ENCODE measurements at regions of chr19 and their contacts with region 1.

Region 1: GRCh38 chr19:35716801-35717666 is 769 bp upstream of the KMT2B start:
- DNase-seq: peak; percentile 99
- H3K4me3 Mint-ChIP-seq: peak overlapping the region; percentile 92
- H3K27ac Mint-ChIP-seq: peak overlapping the region; percentile 93
- H3K4me1 Mint-ChIP-seq: peaks cover 50% of the 10 kb centered on the region
- H3K27me3 Mint-ChIP-seq: no peaks in the 10 kb centered on the region

Region 2: DNA sequence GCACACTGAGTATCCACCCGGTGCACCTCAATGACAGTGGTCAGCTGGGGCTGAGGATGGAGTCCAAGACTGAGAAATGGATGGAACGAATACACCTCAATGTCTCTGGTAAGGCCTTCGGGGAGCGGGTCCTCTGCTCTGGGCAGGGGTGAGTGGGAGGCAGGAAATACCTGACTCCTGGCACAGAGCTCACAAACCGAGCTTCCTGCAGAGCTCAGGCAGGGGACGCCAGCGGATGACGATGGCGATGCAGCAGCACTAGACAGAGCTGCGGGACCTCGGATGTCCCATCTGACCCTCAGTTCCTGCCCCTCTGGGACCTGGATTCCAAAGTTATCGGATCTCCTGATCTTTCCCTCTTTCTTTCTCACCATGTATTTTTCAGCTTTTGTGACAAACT is 384.2 kb before region 1 on chr19:
- intact Hi-C with region 1: no loop called
- DNase-seq: peak; percentile 78
- H3K4me3 Mint-ChIP-seq: peak overlapping the region; percentile 45
- H3K27ac Mint-ChIP-seq: peak overlapping the region; percentile 75
- H3K4me1 Mint-ChIP-seq: peaks cover 31% of the 10 kb centered on the region
- H3K27me3 Mint-ChIP-seq: no peaks in the 10 kb centered on the region

Region 3: DNA sequence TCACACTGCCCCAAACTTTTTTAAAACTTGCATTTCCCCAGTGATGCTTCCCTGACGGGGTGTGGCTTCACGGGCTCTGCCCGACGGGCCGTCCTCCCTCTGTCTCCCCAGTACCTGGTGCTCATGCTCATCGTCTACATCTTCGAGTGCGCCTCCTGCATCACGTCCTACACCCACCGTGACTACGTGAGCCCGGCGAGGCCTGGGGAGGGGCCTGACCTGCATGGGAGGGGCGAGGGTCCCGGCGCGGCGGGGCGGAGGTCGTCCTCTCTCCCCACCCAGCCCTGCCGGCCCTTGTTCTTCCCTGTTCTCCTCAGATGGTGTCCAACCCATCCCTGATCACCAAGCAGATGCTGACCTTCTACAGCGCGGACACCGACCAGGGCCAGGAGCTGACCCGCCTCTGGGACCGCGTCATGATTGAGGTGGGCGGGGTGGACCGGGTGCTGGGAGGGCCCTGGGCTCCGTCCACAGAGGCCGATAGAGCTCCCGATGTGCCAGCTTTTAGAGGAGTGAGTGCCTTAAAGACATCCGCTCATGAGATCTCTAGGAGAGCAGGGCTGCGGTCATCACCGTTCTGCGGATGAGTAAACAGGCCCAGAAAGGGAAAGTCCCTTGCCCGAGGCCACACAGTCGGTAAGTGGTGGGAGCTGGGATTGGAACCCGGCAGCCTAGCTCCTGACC is 43.8 kb before region 1 on chr19:
- intact Hi-C with region 1: loop called (anchors 1 kb)
- DNase-seq: peak; percentile 85
- H3K4me3 Mint-ChIP-seq: peak overlapping the region; percentile 83
- H3K27ac Mint-ChIP-seq: peak overlapping the region; percentile 48
- H3K4me1 Mint-ChIP-seq: peaks cover 10% of the 10 kb centered on the region
- H3K27me3 Mint-ChIP-seq: peaks cover 32% of the 10 kb centered on the region

Region 4: GRCh38 chr19:35702223-35703012 is 14.6 kb before region 1 on chr19:
- intact Hi-C with region 1: loop called (anchors 1 kb)
- DNase-seq: peak; percentile 98
- H3K4me3 Mint-ChIP-seq: peak overlapping the region; percentile 89
- H3K27ac Mint-ChIP-seq: peak overlapping the region; percentile 92
- H3K4me1 Mint-ChIP-seq: peaks cover 7% of the 10 kb centered on the region
- H3K27me3 Mint-ChIP-seq: no peaks in the 10 kb centered on the region

Region 5: GRCh38 chr19:35748106-35749020 is 31.3 kb after region 1 on chr19 and contains the start of gene LIN37:
- intact Hi-C with region 1: loop called (anchors 1 kb)
- DNase-seq: peak; percentile 100
- H3K4me3 Mint-ChIP-seq: peak within 1 kb of the TSS; percentile 99
- H3K27ac Mint-ChIP-seq: peak within 1 kb of the TSS; percentile 95
- H3K4me1 Mint-ChIP-seq: peaks cover 37% of the 10 kb centered on the region
- H3K27me3 Mint-ChIP-seq: no peaks in the 10 kb centered on the region
- total RNA-seq, gene LIN37: 7.7 and 11.1 TPM in 2 replicates

Region 6: DNA sequence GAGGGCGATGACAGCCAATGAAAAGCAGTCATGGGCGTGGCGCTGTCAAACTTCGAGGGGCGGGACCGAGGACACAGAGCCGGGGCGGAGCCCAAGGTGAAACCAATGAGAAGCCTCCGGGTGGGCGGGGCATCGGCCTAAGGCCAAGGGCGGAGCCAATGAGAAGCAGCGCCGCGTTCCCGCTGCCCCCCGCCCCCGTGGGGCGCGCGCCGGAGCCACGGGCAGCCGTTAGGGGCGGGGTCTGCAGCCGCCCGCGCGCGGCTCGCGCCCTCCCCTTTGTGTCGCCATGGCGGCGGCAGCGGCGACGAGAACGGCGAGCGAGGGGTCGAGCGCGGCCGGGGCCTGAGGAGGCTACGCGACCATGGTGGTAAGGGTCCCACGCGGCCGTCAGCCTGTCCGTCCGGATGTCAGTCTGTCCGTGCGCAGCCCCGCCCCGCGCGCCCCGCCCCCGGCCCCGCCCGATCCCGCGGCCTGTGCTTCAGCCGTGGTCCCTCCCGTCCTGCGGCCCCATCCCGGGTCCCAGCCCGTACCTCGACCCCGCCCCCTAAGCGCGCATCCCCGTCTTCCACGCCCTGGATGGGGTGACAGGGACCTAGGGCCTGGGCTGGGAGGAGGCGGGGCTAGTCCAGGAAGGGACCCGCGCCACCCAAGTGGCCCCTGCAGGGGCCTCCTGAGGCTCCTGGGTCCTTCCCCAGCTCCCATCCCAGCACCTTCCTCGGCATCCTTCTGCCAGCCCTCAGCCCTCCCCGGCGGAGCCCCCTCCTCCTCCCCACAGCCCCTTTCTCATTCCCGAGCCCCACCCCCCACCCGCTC is 58.5 kb after region 1 on chr19 and contains the start of gene ARHGAP33:
- intact Hi-C with region 1: loop called (anchors 1 kb)
- DNase-seq: peak; percentile 100
- H3K4me3 Mint-ChIP-seq: peak within 1 kb of the TSS; percentile 88
- H3K27ac Mint-ChIP-seq: peak within 1 kb of the TSS; percentile 71
- H3K4me1 Mint-ChIP-seq: peaks cover 26% of the 10 kb centered on the region
- H3K27me3 Mint-ChIP-seq: no peaks in the 10 kb centered on the region
- total RNA-seq, gene ARHGAP33: 24.6 and 26.4 TPM in 2 replicates

Region 7: GRCh38 chr19:35931161-35931873 is 214.3 kb after region 1 on chr19:
- intact Hi-C with region 1: loop called (anchors 1 kb)
- DNase-seq: peak; percentile 100
- H3K4me3 Mint-ChIP-seq: peak overlapping the region; percentile 79
- H3K27ac Mint-ChIP-seq: peak overlapping the region; percentile 90
- H3K4me1 Mint-ChIP-seq: peaks cover 25% of the 10 kb centered on the region
- H3K27me3 Mint-ChIP-seq: no peaks in the 10 kb centered on the region